Right ventricle myocardium inferior (tissue), 1 donor: ENCODE measurements at regions of chr5 and their contacts with region 1.

Region 1: GRCh38 chr5:115377468-115378217 is 81.2 kb upstream of the CCDC112 start:
- DNase-seq: no peak
- ATAC-seq: peak; percentile 80

Region 2: GRCh38 chr5:115319007-115319406 is 58.6 kb before region 1 on chr5:
- intact Hi-C with region 1: loop called (anchors 5 kb)
- DNase-seq: no peak
- ATAC-seq: peak; percentile 39

Region 3: GRCh38 chr5:115460472-115460871 is 82.8 kb after region 1 on chr5:
- intact Hi-C with region 1: loop called (anchors 2 kb)
- DNase-seq: peak; percentile 85
- ATAC-seq: peak; percentile 90

Region 4: DNA sequence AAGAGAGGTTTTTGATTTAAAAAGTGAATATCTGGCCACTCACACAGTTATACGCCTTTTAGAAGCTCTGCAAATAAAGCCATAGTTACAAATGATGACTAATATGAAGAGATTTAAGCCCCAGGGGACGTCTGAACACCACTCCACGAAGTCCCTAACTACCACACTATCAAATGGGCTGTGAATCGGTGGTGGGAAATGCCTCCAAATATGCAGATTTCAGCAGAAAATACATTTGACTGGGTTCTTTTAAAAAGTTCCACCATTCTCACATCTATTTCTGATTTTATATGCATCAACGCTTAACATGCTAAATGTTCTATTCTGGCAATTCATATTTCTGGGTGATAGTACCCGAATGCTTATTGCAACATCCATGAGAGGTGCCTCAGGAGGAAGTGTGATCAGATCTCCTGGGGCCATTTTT is 202.1 kb after region 1 on chr5:
- intact Hi-C with region 1: loop called (anchors 1 kb)
- DNase-seq: no peak
- ATAC-seq: no peak

Region 5: GRCh38 chr5:115586601-115587048 is 209.0 kb after region 1 on chr5:
- intact Hi-C with region 1: loop called (anchors 5 kb)
- DNase-seq: no peak
- ATAC-seq: no peak